CD8-positive, alpha-beta T cell (primary cell): ENCODE measurements at regions of chr12 and their contacts with region 1.

Region 1: GRCh38 chr12:55001198-55001868 is 16.8 kb upstream of the TESPA1 start:
- DNase-seq: no peak
- ATAC-seq: no peak
- H3K4me3 ChIP-seq: no peak overlapping the region
- H3K4me3 Mint-ChIP-seq: peak overlapping the region; percentile 23
- H3K27ac ChIP-seq: no peak overlapping the region
- H3K27ac Mint-ChIP-seq: peak overlapping the region; percentile 74
- H3K4me1 ChIP-seq: peaks cover 14% of the 10 kb centered on the region
- H3K4me1 Mint-ChIP-seq: peaks cover 18% of the 10 kb centered on the region
- H3K27me3 ChIP-seq: no peaks in the 10 kb centered on the region
- H3K27me3 Mint-ChIP-seq: no peaks in the 10 kb centered on the region
- CTCF ChIP-seq: no peak

Region 2: GRCh38 chr12:55037351-55037987 is 36.1 kb after region 1 on chr12:
- CTCF ChIA-PET with region 1: no interaction called
- POLR2A ChIA-PET with region 1: no interaction called
- intact Hi-C with region 1: loop called in 1 of 2 experiments (anchors 5 kb)
- DNase-seq: no peak
- ATAC-seq: no peak
- H3K4me3 ChIP-seq: no peak overlapping the region
- H3K4me3 Mint-ChIP-seq: no peak overlapping the region
- H3K27ac ChIP-seq: no peak overlapping the region
- H3K27ac Mint-ChIP-seq: peak overlapping the region; percentile 10
- H3K4me1 ChIP-seq: peaks cover 43% of the 10 kb centered on the region
- H3K4me1 Mint-ChIP-seq: peaks cover 57% of the 10 kb centered on the region
- H3K27me3 ChIP-seq: no peaks in the 10 kb centered on the region
- H3K27me3 Mint-ChIP-seq: peaks cover 1% of the 10 kb centered on the region
- CTCF ChIP-seq: no peak